ENCODE measurements at regions of chr3 and their contacts with region 1.

Region 1: DNA sequence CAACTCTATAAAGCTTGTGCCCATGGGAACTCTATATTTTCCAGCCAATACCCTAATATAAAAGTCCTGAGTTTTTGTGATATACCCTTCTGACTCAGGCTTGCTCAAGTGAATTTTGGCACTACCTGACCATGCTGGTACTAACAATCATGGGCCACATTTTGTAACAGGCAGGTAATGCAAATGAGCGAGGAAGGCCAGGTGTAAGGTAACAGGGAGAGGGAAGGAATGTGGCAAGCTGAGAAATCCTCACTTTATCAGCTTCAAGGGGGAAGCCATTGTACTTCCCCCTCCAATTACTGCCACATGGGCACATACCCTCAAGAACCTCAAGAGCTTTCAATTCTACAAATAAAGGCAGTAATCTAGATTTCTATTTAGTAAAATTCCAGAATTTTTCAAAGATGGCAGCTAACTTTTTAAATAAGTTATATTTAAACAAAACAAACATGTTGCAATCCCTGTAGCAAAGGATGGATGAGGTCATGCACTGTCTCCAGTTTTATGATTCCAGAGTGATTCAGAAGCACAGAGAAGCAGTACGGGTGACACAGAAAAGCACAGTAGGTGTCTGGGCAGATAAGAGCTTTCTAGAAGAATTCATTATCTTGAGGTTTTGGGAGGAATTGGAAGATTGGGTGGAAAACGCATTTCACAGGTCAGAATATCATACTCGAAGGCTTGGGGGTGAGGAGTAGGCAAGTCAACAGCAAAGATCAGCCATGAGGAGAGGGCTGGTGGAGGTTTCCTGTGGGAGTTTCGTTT is 87.6 kb downstream of the FOXP1 start:
- DNase-seq: peak in 2 of 9 experiments; percentile 48 to 69
- ATAC-seq: no peak
- H3K4me3 ChIP-seq: peak overlapping the region; percentile 38 to 39
- H3K4me3 Mint-ChIP-seq: peak overlapping the region; percentile 76
- H3K27ac ChIP-seq: peak overlapping the region; percentile 46 to 80
- H3K27ac Mint-ChIP-seq: peak overlapping the region; percentile 94
- H3K4me1 ChIP-seq: peaks cover 65% of the 10 kb centered on the region
- H3K4me1 Mint-ChIP-seq: peaks cover 83% of the 10 kb centered on the region
- H3K27me3 ChIP-seq: no peaks in the 10 kb centered on the region
- H3K27me3 Mint-ChIP-seq: no peaks in the 10 kb centered on the region
- CTCF ChIP-seq: no peak

Region 2: DNA sequence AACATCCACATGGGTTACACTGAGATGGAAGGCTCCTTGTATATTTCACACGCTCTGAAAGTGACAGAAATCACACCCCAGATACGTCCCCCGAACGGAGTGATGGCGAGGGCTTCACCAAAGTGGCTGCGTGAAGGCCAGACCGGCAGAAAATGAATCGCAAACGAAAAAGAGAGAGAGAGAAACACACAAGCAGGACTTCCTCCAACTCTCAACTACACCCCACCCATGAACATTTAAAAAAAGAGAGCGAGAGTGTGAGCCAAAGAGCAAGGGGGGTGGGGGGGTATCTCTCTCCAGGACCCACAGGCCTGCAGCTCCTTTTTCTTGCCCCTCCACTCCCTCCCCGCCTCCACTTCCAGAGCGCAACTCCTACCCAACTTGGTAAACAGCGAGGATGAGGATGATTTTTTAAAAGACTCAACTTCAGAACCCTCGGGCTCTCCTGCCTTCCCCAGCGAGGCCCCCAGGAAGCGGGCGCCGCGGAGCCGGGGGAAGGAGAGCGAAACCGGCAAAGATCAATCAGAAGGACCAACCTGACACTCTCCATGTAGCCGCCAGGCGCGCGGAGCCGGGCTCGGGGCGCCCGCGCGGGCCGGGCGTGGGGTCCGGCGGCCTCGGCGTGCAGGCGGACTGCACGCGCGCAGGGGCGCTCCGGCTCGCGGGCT is 431.5 kb before region 1 on chr3:
- CTCF ChIA-PET with region 1: no interaction called
- POLR2A ChIA-PET with region 1: interaction called, 3 read pairs
- intact Hi-C with region 1: loop called (anchors 2 to 5 kb)
- DNase-seq: peak; percentile 48 to 86 (median 66)
- ATAC-seq: peak; percentile 43
- H3K4me3 ChIP-seq: peak overlapping the region; percentile 65 to 91
- H3K4me3 Mint-ChIP-seq: no peak overlapping the region
- H3K27ac ChIP-seq: peak overlapping the region; percentile 80 to 85
- H3K27ac Mint-ChIP-seq: no peak overlapping the region
- H3K4me1 ChIP-seq: peaks cover 79% of the 10 kb centered on the region
- H3K4me1 Mint-ChIP-seq: peaks cover 67% of the 10 kb centered on the region
- H3K27me3 ChIP-seq: no peaks in the 10 kb centered on the region
- H3K27me3 Mint-ChIP-seq: no peaks in the 10 kb centered on the region
- CTCF ChIP-seq: no peak

Region 3: GRCh38 chr3:71069797-71070196 is 426.1 kb before region 1 on chr3:
- CTCF ChIA-PET with region 1: interaction called, 3 read pairs
- POLR2A ChIA-PET with region 1: no interaction called
- intact Hi-C with region 1: loop called (anchors 2 to 5 kb)
- DNase-seq: peak; percentile 57 to 81 (median 72)
- ATAC-seq: peak; percentile 29
- H3K4me3 ChIP-seq: no peak overlapping the region
- H3K4me3 Mint-ChIP-seq: no peak overlapping the region
- H3K27ac ChIP-seq: no peak overlapping the region
- H3K27ac Mint-ChIP-seq: peak overlapping the region; percentile 91
- H3K4me1 ChIP-seq: peaks cover 89% of the 10 kb centered on the region
- H3K4me1 Mint-ChIP-seq: peaks cover 84% of the 10 kb centered on the region
- H3K27me3 ChIP-seq: no peaks in the 10 kb centered on the region
- H3K27me3 Mint-ChIP-seq: no peaks in the 10 kb centered on the region
- CTCF ChIP-seq: peak; percentile 67

Region 4: DNA sequence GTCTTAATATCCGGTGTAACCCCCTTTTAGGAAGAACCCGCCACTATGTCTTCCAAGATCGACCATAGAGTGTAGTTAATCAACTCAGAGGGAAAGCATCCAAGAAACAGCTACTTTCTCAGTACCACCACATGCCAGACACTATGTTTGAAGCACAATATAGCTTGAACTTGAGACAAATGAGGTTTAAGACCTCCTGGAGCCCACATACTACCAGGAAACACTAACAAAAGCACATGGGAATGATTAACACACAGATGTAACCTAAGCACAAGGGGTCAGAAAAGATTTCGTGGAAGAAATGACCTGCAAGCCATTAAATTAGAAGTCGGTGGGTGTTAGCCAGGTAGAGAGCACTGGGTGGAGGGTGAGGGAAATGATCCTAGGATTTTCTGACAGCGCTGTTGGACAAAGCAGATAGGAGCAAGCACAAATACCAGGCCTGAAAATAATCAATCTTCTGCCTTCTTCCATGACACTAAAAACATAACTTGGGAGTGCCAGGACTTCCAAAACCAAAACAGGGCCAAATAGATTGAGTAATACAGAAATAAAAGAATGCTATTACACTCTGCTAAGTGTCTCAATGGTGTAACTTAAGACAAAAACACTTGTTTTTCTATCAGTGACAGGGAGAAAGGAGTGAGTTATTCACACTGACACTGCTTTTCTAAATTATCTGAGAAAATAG is 126.0 kb before region 1 on chr3:
- CTCF ChIA-PET with region 1: no interaction called
- POLR2A ChIA-PET with region 1: no interaction called
- intact Hi-C with region 1: loop called in 1 of 2 experiments (anchors 1 kb)
- DNase-seq: no peak
- ATAC-seq: no peak
- H3K4me3 ChIP-seq: no peak overlapping the region
- H3K4me3 Mint-ChIP-seq: no peak overlapping the region
- H3K27ac ChIP-seq: no peak overlapping the region
- H3K27ac Mint-ChIP-seq: peak overlapping the region; percentile 76
- H3K4me1 ChIP-seq: peaks cover 72% of the 10 kb centered on the region
- H3K4me1 Mint-ChIP-seq: peaks cover 84% of the 10 kb centered on the region
- H3K27me3 ChIP-seq: no peaks in the 10 kb centered on the region
- H3K27me3 Mint-ChIP-seq: no peaks in the 10 kb centered on the region
- CTCF ChIP-seq: no peak

Region 5: DNA sequence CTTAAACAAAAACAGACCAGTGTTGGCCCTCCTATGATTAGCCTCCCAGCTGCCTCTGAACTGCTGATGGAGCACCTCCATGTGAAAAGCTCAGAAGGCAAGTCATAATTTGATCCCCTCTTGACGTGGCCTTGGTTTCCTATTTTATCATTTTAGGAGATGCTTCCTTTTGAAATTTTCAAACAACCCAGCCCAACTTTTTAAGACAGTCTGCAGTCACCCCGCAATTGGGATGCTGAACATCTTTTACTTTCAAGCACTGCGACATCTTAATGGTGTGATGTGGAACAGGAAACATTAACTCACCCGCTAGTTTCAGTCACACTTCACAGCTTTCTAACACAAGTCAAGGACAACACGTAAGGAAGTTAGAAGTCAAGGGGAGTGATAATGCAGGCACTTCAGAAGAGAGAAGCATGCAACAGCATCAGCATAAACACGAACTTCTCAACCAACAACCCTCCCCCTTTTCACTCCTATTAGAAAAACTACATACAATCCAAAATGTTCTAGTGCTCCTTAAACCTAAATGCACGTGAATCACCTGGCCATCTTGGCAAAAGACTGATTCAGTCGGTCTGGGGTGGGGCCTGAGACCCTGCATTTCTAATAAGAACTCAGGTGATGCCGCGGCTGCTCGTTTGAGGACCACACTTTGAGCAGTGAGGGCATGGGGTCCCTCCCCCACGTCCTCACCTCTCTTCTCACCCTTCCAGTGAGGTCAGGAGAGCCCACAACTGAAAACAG is 73.9 kb before region 1 on chr3:
- CTCF ChIA-PET with region 1: interaction called, 3 read pairs
- POLR2A ChIA-PET with region 1: interaction called, 6 read pairs
- intact Hi-C with region 1: loop called in 1 of 2 experiments (anchors 2 kb)
- DNase-seq: peak in 5 of 9 experiments; percentile 38 to 88 (median 68)
- ATAC-seq: peak; percentile 85
- H3K4me3 ChIP-seq: peak overlapping the region in 1 of 2 experiments; percentile 1
- H3K4me3 Mint-ChIP-seq: peak overlapping the region; percentile 20
- H3K27ac ChIP-seq: peak overlapping the region; percentile 67 to 80
- H3K27ac Mint-ChIP-seq: peak overlapping the region; percentile 98
- H3K4me1 ChIP-seq: peaks cover 86% of the 10 kb centered on the region
- H3K4me1 Mint-ChIP-seq: peaks cover 91% of the 10 kb centered on the region
- H3K27me3 ChIP-seq: no peaks in the 10 kb centered on the region
- H3K27me3 Mint-ChIP-seq: no peaks in the 10 kb centered on the region
- CTCF ChIP-seq: no peak

Region 6: DNA sequence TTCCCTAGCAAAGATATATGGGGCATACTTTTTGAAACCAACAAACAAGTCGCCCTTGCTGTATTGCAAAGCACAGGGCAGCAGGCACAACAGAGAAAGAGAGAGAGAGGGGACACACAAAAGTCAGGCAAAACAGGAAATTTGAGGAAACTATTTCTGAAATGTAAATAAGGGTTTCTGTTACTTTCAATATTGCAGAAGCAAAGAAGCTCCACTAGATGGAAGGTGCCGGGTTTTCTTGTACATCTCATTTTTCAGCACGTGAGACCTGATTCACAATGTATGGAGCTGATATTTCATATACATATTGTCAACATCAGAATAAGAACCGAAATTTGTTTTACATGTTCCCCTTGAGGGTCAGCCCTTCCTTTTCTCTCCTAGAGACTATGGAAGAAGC is 39.7 kb before region 1 on chr3:
- CTCF ChIA-PET with region 1: interaction called, 4 read pairs
- POLR2A ChIA-PET with region 1: interaction called, 79 read pairs
- intact Hi-C with region 1: no loop called
- DNase-seq: peak in 2 of 9 experiments; percentile 46 to 70
- ATAC-seq: peak; percentile 39
- H3K4me3 ChIP-seq: peak overlapping the region; percentile 22 to 32
- H3K4me3 Mint-ChIP-seq: peak overlapping the region; percentile 81
- H3K27ac ChIP-seq: peak overlapping the region; percentile 57 to 78
- H3K27ac Mint-ChIP-seq: peak overlapping the region; percentile 99
- H3K4me1 ChIP-seq: peaks cover 85% of the 10 kb centered on the region
- H3K4me1 Mint-ChIP-seq: peaks cover 95% of the 10 kb centered on the region
- H3K27me3 ChIP-seq: no peaks in the 10 kb centered on the region
- H3K27me3 Mint-ChIP-seq: no peaks in the 10 kb centered on the region
- CTCF ChIP-seq: peak; percentile 50

Region 7: DNA sequence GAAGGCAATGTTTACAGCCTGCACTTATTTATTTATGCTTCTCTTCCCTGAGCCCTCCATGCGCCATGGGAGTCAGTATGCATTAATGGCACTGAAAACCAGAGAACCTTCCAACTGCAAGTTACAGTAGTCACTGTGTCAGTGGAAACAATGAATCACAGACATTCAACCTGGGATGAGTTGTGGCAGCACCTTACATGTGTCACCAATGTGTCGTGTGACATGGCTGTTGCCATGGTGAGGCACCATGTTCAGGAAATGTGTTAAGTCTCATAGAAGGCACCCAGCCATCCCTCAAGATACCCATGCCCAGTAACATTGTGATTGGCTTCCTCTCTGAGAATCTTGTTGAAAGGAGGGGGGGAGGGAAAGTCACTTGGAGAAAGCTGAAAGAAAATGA is 17.3 kb before region 1 on chr3:
- CTCF ChIA-PET with region 1: no interaction called
- POLR2A ChIA-PET with region 1: interaction called, 7 read pairs
- intact Hi-C with region 1: loop called in 1 of 2 experiments (anchors 2 kb)
- DNase-seq: peak in 7 of 9 experiments; percentile 36 to 77 (median 58)
- ATAC-seq: peak; percentile 83
- H3K4me3 ChIP-seq: peak overlapping the region in 1 of 2 experiments; percentile 5
- H3K4me3 Mint-ChIP-seq: peak overlapping the region; percentile 1
- H3K27ac ChIP-seq: peak overlapping the region in 1 of 2 experiments; percentile 4
- H3K27ac Mint-ChIP-seq: peak overlapping the region; percentile 95
- H3K4me1 ChIP-seq: peaks cover 80% of the 10 kb centered on the region
- H3K4me1 Mint-ChIP-seq: peaks cover 85% of the 10 kb centered on the region
- H3K27me3 ChIP-seq: no peaks in the 10 kb centered on the region
- H3K27me3 Mint-ChIP-seq: no peaks in the 10 kb centered on the region
- CTCF ChIP-seq: no peak

Measured in CD8-positive, alpha-beta T cell (primary cell).